ENCODE measurements at regions of chr17 and their contacts with region 1.

Region 1: DNA sequence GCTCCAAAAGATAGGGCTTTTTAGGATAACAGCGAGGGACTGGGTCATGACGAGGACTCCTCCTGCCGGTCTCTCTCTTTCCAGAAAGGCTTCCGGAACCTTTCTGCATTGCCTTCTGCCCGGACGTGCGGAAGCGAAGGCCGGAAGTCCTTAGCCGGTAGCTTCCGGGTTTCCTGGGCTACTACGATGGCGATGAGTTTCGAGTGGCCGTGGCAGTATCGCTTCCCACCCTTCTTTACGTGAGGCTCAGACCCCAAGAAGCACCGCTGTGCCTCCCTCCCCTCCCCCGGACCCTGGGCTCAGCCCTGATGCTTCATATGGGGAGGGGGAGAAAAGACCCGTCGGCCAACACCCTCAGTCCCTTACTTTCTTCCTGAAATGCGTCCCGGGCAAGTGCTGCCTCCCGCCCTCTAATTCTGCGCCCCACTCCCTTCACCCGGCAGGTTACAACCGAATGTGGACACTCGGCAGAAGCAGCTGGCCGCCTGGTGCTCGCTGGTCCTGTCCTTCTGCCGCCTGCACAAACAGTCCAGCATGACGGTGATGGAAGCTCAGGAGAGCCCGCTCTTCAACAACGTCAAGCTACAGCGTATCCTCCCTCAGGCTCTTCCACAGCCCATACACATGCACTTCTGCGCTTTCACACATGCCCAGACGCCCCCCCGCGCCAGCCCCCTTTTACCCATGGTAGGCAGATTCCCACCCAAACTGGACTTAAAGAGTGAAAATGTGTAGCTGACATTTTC is at the start of gene VPS25:
- DNase-seq: peak; percentile 84
- ATAC-seq: peak; percentile 95
- H3K4me3 ChIP-seq: peak within 1 kb of the TSS; percentile 74 to 96 (median 88)
- H3K27ac ChIP-seq: peak within 1 kb of the TSS; percentile 66
- H3K4me1 ChIP-seq: peaks cover 53% of the 10 kb centered on the region
- H3K27me3 ChIP-seq: no peaks in the 10 kb centered on the region; a peak in 1 of 5 replicates
- CTCF ChIP-seq: peak; percentile 61
- EP300 ChIP-seq: peak; percentile 44 to 53; a peak in 2 of 4 replicates
- POLR2A ChIP-seq: peak; percentile 95 to 96
- RAD21 ChIP-seq: peak; percentile 74
- total RNA-seq, gene VPS25: 148 and 161 TPM in 2 replicates

Region 2: GRCh38 chr17:42744806-42745617 is 28.5 kb before region 1 on chr17 and contains the start of gene EZH1:
- CTCF ChIA-PET with region 1: no interaction called
- POLR2A ChIA-PET with region 1: interaction called, 31 read pairs
- in situ Hi-C with region 1: no loop called
- intact Hi-C with region 1: no loop called
- DNase-seq: peak; percentile 91
- ATAC-seq: peak; percentile 89
- H3K4me3 ChIP-seq: peak within 1 kb of the TSS; percentile 58 to 84 (median 76)
- H3K27ac ChIP-seq: peak within 1 kb of the TSS; percentile 83
- H3K4me1 ChIP-seq: peaks cover 62% of the 10 kb centered on the region
- H3K27me3 ChIP-seq: no peaks in the 10 kb centered on the region
- CTCF ChIP-seq: no peak; the same call in 1 of the 2 replicates
- EP300 ChIP-seq: peak; percentile 3 to 45; a peak in 1 of 4 replicates
- POLR2A ChIP-seq: peak; percentile 62 to 64; a peak in 3 of 4 replicates
- RAD21 ChIP-seq: no peak
- total RNA-seq, gene EZH1: 6.0 and 11.6 TPM in 2 replicates

Region 3: DNA sequence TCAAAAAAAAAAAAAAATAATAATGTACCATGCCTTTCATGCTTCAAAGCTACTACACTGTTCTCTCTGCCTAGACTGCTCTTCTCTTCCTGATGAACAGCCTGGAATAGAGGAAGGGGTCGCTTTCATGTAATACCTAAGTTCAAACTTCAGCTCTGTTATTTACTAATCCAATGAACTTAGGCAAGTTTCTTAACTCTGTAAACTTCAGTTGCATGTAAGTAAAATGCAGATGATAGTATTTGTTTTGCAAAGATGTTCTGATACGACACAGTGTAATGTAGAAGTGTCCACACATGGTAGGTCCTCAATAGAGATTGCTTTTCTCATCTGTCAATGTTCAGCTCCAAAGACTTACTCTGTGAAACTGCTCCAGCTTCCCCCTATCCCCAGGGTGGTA is 18.5 kb after region 1 on chr17:
- CTCF ChIA-PET with region 1: no interaction called
- POLR2A ChIA-PET with region 1: interaction called, 278 read pairs
- in situ Hi-C with region 1: no loop called
- intact Hi-C with region 1: no loop called
- DNase-seq: peak; percentile 73
- ATAC-seq: peak; percentile 63
- H3K4me3 ChIP-seq: no peak overlapping the region
- H3K27ac ChIP-seq: peak overlapping the region; percentile 58
- H3K4me1 ChIP-seq: peaks cover 59% of the 10 kb centered on the region
- H3K27me3 ChIP-seq: no peaks in the 10 kb centered on the region
- CTCF ChIP-seq: no peak
- EP300 ChIP-seq: peak in 1 of 2 experiments; percentile 80; a peak in 2 of 4 replicates
- POLR2A ChIP-seq: no peak
- RAD21 ChIP-seq: no peak

Region 4: GRCh38 chr17:42798383-42799380 is 25.2 kb after region 1 on chr17 and contains the starts of genes CNTD1 and COA3:
- CTCF ChIA-PET with region 1: no interaction called
- POLR2A ChIA-PET with region 1: interaction called, 278 read pairs
- in situ Hi-C with region 1: no loop called
- intact Hi-C with region 1: no loop called
- DNase-seq: peak; percentile 88
- ATAC-seq: peak; percentile 89
- H3K4me3 ChIP-seq: peak within 1 kb of the TSS; percentile 88 to 94 (median 94)
- H3K27ac ChIP-seq: peak within 1 kb of the TSS; percentile 88
- H3K4me1 ChIP-seq: peaks cover 58% of the 10 kb centered on the region
- H3K27me3 ChIP-seq: no peaks in the 10 kb centered on the region; a peak in 2 of 5 replicates
- CTCF ChIP-seq: peak; percentile 42
- EP300 ChIP-seq: peak in 1 of 2 experiments; percentile 34; a peak in 1 of 4 replicates
- POLR2A ChIP-seq: peak; percentile 77 to 92
- RAD21 ChIP-seq: peak; percentile 67
- total RNA-seq, gene CNTD1: 0.11 TPM in 1 of 2 replicates, not detected in the other
- total RNA-seq, gene COA3: 202 and 250 TPM in 2 replicates

Region 5: GRCh38 chr17:42832974-42833766 is 59.7 kb after region 1 on chr17 and contains the start of gene PSME3:
- CTCF ChIA-PET with region 1: no interaction called
- POLR2A ChIA-PET with region 1: interaction called, 28 read pairs
- in situ Hi-C with region 1: no loop called
- intact Hi-C with region 1: no loop called
- DNase-seq: peak; percentile 88
- ATAC-seq: peak; percentile 95
- H3K4me3 ChIP-seq: peak within 1 kb of the TSS; percentile 92 to 98 (median 92)
- H3K27ac ChIP-seq: peak within 1 kb of the TSS; percentile 90
- H3K4me1 ChIP-seq: peaks cover 40% of the 10 kb centered on the region
- H3K27me3 ChIP-seq: no peaks in the 10 kb centered on the region; a peak in 1 of 5 replicates
- CTCF ChIP-seq: peak; percentile 37
- EP300 ChIP-seq: peak in 1 of 2 experiments; percentile 26; a peak in 2 of 4 replicates
- POLR2A ChIP-seq: peak; percentile 93 to 97
- RAD21 ChIP-seq: peak; percentile 30; the same call in 1 of the 2 replicates
- total RNA-seq, gene PSME3: 135 and 202 TPM in 2 replicates